Mammary epithelial cell (primary cell): ENCODE measurements at regions of chr16 and their contacts with region 1.

Region 1: DNA sequence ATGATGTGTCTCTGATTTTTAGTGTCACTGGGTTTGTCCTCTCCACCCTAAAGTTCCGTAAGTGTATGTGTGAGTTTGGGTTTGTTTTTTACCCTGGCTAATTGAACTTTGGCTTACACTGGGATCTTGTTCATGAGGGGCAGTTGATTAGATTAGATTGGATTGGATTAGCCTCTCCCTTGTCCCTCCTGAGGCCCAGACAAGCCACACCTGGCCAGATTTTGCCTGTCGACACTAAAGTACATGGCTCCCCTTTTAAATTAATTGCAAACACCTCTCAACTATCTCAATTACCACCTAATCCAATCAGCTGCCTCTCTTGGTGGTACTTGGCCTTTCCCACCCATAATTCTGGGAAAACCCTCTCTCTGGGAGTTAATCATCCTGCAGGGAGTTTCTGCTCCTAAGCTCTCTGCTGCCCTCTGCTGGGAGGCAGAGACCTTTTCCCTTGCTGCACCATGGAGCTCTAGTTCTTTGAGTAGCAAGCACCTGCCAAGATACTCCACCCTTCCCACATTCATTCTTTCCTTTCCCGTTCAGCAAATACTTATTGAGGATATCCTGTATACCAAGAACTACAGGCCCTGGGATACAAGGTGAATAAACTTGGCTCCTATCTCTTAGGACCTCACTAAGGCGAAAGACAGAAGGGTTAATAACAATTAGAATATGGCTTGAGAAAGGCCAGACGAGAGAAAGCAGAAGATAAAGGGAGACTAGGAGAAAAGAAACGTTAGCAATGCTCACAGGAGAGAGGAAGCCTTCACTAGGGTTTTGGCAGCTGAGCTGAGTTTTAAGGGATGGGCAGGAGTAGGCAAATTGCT is 60.0 kb upstream of the MPHOSPH6 start:
- DNase-seq: peak; percentile 60
- H3K4me3 ChIP-seq: no peak overlapping the region
- H3K27ac ChIP-seq: no peak overlapping the region
- H3K4me1 ChIP-seq: peaks cover 14% of the 10 kb centered on the region
- H3K27me3 ChIP-seq: no peaks in the 10 kb centered on the region
- CTCF ChIP-seq: peak; percentile 90 to 96

Region 2: DNA sequence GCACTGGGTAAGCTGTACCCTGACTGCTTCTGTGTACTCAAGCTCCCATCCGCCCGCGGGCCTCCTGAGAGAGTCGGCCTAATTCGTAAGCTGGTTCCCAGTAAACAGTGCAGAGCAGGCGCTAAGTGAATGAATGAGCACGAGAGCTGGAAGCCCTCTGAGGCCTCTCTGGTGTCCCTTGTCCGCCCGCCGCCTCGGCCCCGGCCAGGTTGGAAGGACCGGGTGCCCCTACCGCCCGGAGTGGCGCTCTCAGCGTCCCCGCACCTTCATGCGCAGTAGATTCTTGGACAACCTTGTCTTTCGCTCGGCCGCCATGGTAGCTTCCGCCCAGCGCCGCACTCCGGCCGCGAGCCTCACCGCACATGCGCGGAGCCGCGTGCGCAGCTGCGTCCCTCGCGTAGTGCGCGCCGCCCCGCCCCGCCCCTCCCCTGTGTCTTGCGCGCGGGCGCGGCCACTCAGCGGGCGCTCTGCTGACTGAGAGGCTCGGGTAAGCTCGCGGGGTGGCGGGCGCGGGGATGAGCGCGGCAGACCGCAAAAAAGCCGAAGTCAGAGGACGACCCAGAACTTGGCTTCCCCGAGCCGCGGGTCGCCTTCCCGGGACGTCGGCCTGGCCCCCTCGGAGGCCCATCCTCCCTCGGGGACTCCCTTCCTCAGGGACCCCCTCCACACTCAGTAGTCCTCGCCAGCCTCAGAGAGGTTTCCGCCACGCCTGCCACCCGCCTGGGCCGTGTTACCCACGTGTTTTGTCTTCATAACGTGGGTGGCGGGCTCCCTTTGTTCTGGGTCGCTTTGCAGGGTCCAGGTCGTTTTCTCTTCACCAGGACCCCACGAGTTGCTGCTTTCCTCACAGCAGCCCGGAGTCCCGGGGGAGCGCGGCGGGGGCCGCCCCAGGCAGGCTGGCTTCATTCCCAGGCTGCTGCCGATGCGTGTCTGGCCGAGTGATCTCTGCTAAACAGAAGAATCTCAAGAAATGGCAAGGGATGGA is 59.9 kb before region 1 on chr16 and contains the start of gene MPHOSPH6:
- CTCF ChIA-PET with region 1: no interaction called
- dilution Hi-C with region 1: no loop called
- in situ Hi-C with region 1: no loop called
- intact Hi-C with region 1: loop called (anchors 1 kb)
- DNase-seq: peak; percentile 91
- H3K4me3 ChIP-seq: peak within 1 kb of the TSS; percentile 84 to 100 (median 89)
- H3K27ac ChIP-seq: peak within 1 kb of the TSS; percentile 93
- H3K4me1 ChIP-seq: peaks cover 16% of the 10 kb centered on the region
- H3K27me3 ChIP-seq: no peaks in the 10 kb centered on the region
- CTCF ChIP-seq: no peak
- total RNA-seq, gene MPHOSPH6: 39.3 to 68.1 TPM

Region 3: DNA sequence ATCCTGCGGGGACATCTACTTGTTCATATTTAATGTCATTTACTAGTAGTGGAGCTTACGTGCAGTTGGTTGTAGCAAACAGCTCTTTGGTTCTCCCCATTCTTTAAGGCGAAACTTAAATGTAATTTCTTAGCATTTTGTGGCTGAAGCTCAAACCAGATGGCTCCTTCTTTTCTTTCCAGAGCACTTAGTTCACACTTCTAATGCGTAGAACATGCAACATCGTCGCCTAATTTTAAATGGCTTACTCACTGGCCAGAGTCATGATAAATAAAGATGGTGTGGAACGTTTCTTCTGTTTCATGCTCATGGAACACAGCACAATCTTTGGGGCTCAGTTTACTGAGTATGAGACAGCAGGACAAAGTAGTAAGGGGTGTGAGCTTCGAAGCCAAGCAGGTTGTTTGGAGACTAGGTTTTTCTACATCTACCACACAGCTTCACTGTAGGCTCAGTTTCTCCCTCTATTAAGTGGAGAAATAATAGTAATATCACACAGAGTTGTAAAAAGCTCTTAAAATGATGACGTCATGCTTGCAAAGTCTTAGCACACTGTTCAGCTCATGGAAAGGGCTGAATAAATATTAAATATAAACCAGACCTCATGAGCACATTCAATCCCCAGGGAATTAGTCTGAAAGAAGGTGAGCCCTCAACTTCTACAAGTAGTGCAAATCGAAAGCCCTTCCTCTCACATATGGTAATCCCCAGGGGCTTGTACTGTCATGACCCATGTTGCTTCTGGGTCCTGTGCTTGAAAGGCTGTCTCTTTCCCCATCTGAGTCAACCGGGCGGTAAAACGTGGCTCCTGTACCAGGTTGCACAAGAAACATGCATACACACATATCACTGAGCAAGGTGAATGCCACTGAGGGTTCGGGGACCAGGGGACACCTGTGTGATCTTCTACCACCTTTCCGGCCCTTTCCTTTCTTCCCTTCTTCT is 781.0 kb after region 1 on chr16:
- CTCF ChIA-PET with region 1: interaction called, 10 read pairs
- dilution Hi-C with region 1: no loop called
- in situ Hi-C with region 1: no loop called
- intact Hi-C with region 1: no loop called
- DNase-seq: no peak
- H3K4me3 ChIP-seq: no peak overlapping the region
- H3K27ac ChIP-seq: no peak overlapping the region
- H3K4me1 ChIP-seq: no peaks in the 10 kb centered on the region
- H3K27me3 ChIP-seq: no peaks in the 10 kb centered on the region
- CTCF ChIP-seq: no peak